Activated naive CD4-positive, alpha-beta T cell treated with anti-CD3 and anti-CD28 coated beads, Interleukin-2, amount 10 ng/mL, durations not matched to agents 7 days and 5 days (primary cell): ENCODE measurements at regions of chr12 and their contacts with region 1.

Region 1: DNA sequence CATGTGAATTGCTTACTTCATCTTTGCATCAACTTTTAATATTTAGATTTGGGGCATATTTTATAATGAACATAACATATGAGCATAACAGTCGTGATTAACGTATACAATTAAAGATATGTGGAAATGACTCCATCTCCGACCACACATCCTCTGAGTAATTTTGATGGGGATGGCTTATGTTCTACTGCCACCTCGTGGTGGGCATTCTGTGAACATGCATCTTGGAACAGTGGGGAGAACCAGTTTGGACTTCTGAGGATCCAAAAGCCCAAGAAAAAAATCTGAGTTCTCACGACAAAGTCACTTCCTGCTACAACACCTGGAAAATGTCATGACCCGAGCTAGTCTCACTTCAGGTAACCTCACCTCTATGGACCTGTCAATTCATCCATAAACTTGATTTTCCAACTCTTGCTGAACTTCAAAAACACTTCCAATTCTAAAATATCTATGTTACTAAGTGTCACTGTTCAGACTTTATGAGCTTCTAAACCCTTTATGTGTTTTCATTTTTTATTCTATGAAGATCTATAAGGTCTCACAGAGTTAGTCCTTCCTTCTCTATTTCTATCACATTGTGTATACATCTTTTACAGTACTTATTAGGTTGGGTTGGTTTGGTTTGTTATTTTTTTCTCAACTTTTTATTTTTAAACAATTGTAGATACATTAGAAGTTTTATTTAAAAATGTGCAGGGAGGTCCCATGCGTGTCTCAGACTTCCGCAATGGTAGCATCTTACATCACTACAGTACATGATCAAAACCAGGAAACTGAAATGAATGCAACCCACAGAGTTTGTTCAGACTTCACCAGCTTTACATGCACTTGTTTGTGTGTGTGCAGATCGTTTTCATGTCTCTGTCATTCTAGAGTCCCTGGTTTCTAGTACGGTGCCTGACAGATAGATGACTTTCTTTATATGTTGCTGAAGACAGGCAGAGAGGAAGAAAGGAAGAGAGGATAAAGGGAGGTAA is 38.2 kb upstream of the STAB2 start:
- DNase-seq: peak; percentile 72
- H3K4me3 Mint-ChIP-seq: no peak overlapping the region
- H3K27ac Mint-ChIP-seq: no peak overlapping the region
- H3K4me1 Mint-ChIP-seq: no peaks in the 10 kb centered on the region
- H3K27me3 Mint-ChIP-seq: peaks cover 15% of the 10 kb centered on the region

Region 2: GRCh38 chr12:102883204-102883799 is 665.6 kb before region 1 on chr12:
- CTCF ChIA-PET with region 1: interaction called, 33 read pairs
- DNase-seq: peak; percentile 50
- H3K4me3 Mint-ChIP-seq: no peak overlapping the region
- H3K27ac Mint-ChIP-seq: no peak overlapping the region
- H3K4me1 Mint-ChIP-seq: no peaks in the 10 kb centered on the region
- H3K27me3 Mint-ChIP-seq: peaks cover 4% of the 10 kb centered on the region

Region 3: GRCh38 chr12:102948941-102949352 is 600.0 kb before region 1 on chr12:
- CTCF ChIA-PET with region 1: interaction called, 71 read pairs
- DNase-seq: peak; percentile 59
- H3K4me3 Mint-ChIP-seq: no peak overlapping the region
- H3K27ac Mint-ChIP-seq: no peak overlapping the region
- H3K4me1 Mint-ChIP-seq: peaks cover 11% of the 10 kb centered on the region
- H3K27me3 Mint-ChIP-seq: peaks cover 57% of the 10 kb centered on the region

Region 4: GRCh38 chr12:103495479-103496456 is 53.1 kb before region 1 on chr12 and contains the start of gene C12orf42:
- CTCF ChIA-PET with region 1: interaction called, 16 read pairs
- DNase-seq: peak; percentile 68
- H3K4me3 Mint-ChIP-seq: peak within 1 kb of the TSS; percentile 60
- H3K27ac Mint-ChIP-seq: no peak within 1 kb of the TSS
- H3K4me1 Mint-ChIP-seq: peaks cover 18% of the 10 kb centered on the region
- H3K27me3 Mint-ChIP-seq: peaks cover 41% of the 10 kb centered on the region

Region 5: DNA sequence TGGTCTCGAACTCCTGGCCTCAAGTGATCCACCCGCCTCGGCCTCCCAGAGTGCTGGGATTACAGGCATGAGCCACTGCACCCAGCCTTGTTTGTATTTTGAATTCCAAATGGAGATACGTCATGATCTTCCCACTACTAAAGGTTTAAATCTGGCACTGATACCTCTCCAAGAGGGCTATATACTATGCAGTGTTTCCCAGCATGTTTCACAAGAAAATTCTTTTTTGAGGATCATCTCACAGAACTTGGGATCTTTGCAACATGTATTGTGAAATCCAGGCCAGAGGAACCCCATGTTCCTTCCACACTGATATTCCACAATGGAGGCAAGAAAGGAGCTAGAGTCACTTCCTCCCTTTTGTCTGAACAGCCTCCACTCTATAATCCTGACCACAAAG is 179.4 kb after region 1 on chr12:
- CTCF ChIA-PET with region 1: no interaction called
- DNase-seq: no peak
- H3K4me3 Mint-ChIP-seq: no peak overlapping the region
- H3K27ac Mint-ChIP-seq: no peak overlapping the region
- H3K4me1 Mint-ChIP-seq: no peaks in the 10 kb centered on the region
- H3K27me3 Mint-ChIP-seq: peaks cover 7% of the 10 kb centered on the region